ENCODE measurements at regions of chr6 and their contacts with region 1.

Region 1: DNA sequence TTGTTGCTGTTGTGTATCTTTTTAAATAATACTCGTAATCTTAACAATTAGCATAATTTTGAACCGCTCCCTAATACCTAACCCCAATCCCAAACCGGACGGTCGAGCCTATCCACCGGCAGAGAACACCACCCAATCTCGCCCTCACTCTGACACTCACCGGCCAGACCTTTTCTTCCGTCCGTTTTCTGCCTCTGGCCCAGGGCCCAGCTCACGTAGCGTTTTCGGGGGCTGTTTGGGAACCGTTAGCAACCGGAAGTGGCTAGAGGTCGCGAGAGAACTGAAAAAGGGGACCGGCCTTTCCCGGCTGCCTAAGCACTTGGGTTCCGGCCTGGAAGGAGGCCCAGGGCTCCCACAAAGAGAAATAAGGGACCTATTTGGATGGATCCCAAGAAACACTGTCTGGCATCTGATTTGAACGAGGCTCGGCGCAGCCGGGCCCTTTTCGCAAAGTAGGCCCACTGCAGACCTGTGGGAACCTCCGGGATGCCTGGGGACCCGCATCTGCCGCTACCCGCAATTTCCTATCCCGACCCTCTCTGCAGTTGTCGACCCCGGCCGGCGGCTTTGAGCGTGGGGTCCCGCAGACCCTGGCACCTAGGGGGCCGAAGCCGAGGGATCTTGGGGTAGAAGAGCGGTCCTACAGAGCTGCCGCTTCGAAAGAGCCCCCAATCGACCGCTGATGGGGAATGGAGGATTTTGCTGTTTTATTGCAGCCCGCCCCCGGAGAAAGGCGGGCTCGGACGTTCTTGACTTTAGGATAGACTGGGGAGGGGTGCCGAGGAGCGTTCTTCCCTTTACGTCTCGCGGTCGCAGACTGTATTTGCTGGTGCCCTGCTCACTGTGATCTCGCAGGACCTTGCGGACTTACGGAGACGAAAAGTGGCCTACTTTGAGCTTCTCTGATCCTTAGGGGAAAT is 4.8 kb upstream of the ZKSCAN8 start:
- DNase-seq: peak; percentile 82
- H3K4me3 Mint-ChIP-seq: peak overlapping the region; percentile 97
- H3K27ac Mint-ChIP-seq: peak overlapping the region; percentile 99
- H3K4me1 Mint-ChIP-seq: peaks cover 63% of the 10 kb centered on the region
- H3K27me3 Mint-ChIP-seq: no peaks in the 10 kb centered on the region

Region 2: GRCh38 chr6:27295301-27296081 is 841.4 kb before region 1 on chr6:
- CTCF ChIA-PET with region 1: no interaction called
- intact Hi-C with region 1: no loop called
- DNase-seq: no peak
- H3K4me3 Mint-ChIP-seq: no peak overlapping the region
- H3K27ac Mint-ChIP-seq: no peak overlapping the region
- H3K4me1 Mint-ChIP-seq: peaks cover 3% of the 10 kb centered on the region
- H3K27me3 Mint-ChIP-seq: peaks cover 79% of the 10 kb centered on the region

Region 3: GRCh38 chr6:28080631-28081485 is 56.0 kb before region 1 on chr6:
- CTCF ChIA-PET with region 1: no interaction called
- intact Hi-C with region 1: loop called (anchors 1 kb)
- DNase-seq: peak; percentile 94
- H3K4me3 Mint-ChIP-seq: peak overlapping the region; percentile 97
- H3K27ac Mint-ChIP-seq: peak overlapping the region; percentile 96
- H3K4me1 Mint-ChIP-seq: peaks cover 15% of the 10 kb centered on the region
- H3K27me3 Mint-ChIP-seq: no peaks in the 10 kb centered on the region

Region 4: DNA sequence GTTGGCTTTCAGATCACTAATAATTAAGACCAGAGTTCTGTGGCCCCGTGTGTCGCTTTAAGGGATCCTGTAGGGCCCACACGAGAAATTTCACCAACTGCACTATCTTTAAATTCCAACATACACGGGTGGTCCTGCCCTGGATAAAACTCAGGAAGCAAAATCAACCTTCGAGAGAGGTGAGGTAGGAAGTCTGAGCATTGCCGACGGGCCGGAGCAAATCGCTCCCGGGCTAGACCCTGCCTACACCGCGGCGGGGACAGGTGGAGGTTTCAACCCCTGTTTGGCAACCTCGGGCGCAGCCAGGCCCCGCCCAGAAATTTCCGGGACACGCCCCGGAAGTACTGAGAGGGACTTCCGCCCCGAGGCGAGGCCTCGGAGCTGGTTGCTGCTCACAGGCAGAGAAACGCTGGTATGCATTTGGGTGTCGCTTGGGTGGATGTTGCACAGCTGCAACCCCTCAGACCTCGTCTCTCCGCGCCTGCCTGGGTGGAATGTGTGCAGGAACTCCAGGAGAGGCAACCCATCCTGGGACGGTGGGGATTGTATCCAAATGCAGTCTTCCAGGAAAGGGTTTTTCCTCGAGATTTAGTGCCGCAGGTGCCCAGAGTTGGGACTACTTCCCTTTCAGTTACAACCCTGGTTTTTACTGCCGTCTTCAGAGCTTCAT is 24.7 kb after region 1 on chr6:
- CTCF ChIA-PET with region 1: no interaction called
- intact Hi-C with region 1: loop called (anchors 2 kb)
- DNase-seq: peak; percentile 91
- H3K4me3 Mint-ChIP-seq: peak overlapping the region; percentile 76
- H3K27ac Mint-ChIP-seq: peak overlapping the region; percentile 12
- H3K4me1 Mint-ChIP-seq: peaks cover 13% of the 10 kb centered on the region
- H3K27me3 Mint-ChIP-seq: peaks cover 3% of the 10 kb centered on the region

Region 5: GRCh38 chr6:28266962-28267694 is 130.3 kb after region 1 on chr6 and contains the start of gene ZSCAN26:
- CTCF ChIA-PET with region 1: no interaction called
- intact Hi-C with region 1: loop called (anchors 2 kb)
- DNase-seq: peak; percentile 87
- H3K4me3 Mint-ChIP-seq: no peak within 1 kb of the TSS
- H3K27ac Mint-ChIP-seq: no peak within 1 kb of the TSS
- H3K4me1 Mint-ChIP-seq: peaks cover 43% of the 10 kb centered on the region
- H3K27me3 Mint-ChIP-seq: no peaks in the 10 kb centered on the region
- total RNA-seq, gene ZSCAN26: 2.7 to 3.8 TPM

Region 6: GRCh38 chr6:28399350-28400121 is 262.7 kb after region 1 on chr6 and contains the start of gene ZSCAN12:
- CTCF ChIA-PET with region 1: no interaction called
- intact Hi-C with region 1: loop called (anchors 2 kb)
- DNase-seq: peak; percentile 90
- H3K4me3 Mint-ChIP-seq: peak within 1 kb of the TSS; percentile 91
- H3K27ac Mint-ChIP-seq: peak within 1 kb of the TSS; percentile 91
- H3K4me1 Mint-ChIP-seq: peaks cover 39% of the 10 kb centered on the region
- H3K27me3 Mint-ChIP-seq: peaks cover 20% of the 10 kb centered on the region
- total RNA-seq, gene ZSCAN12: 4.4 to 4.7 TPM

Region 7: GRCh38 chr6:28586962-28587745 is 450.3 kb after region 1 on chr6:
- CTCF ChIA-PET with region 1: no interaction called
- intact Hi-C with region 1: loop called (anchors 5 kb)
- DNase-seq: peak; percentile 80
- H3K4me3 Mint-ChIP-seq: peak overlapping the region; percentile 85
- H3K27ac Mint-ChIP-seq: no peak overlapping the region
- H3K4me1 Mint-ChIP-seq: peaks cover 21% of the 10 kb centered on the region
- H3K27me3 Mint-ChIP-seq: peaks cover 61% of the 10 kb centered on the region